CD8-positive, alpha-beta T cell (primary cell): ENCODE measurements at regions of chr1 and their contacts with region 1.

Region 1: DNA sequence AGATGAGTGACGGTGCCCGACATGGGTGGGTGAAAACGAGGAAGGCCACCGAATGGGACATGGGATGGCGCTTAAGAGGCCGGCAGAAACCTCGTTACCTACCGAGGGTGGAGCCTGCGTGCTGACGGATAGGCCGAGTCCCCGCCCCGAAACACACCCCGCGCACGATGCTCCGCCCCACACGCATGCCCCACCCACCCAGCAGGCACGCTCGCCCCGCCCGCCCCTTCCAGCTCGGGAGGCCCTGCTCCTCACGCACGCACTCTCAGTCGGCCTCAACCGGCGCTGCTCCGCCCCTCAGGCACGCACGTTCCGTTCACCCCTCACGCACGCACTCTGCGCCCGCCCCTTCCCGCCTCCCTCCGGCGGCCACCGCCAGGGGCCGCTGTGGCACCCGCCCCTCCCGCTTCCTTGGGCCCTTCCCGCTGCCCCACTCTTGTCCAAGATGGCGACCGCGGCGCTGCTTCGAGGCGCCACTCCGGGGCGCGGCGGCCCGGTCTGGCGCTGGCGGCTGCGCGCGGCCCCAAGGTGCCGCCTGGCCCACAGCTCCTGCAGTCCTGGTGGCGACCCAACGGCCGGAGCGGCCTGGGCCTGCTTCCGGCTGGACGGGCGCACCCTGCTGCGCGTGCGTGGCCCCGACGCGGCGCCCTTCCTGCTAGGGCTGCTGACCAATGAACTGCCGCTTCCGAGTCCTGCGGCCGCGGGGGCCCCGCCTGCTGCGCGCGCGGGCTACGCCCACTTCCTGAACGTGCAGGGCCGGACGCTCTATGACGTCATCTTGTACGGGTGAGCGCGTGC is at the start of gene IBA57:
- DNase-seq: peak; percentile 99 to 100 (median 100)
- ATAC-seq: peak; percentile 82
- H3K4me3 ChIP-seq: peak within 1 kb of the TSS; percentile 70 to 92
- H3K4me3 Mint-ChIP-seq: peak within 1 kb of the TSS; percentile 85
- H3K27ac ChIP-seq: peak within 1 kb of the TSS; percentile 94 to 99
- H3K27ac Mint-ChIP-seq: peak within 1 kb of the TSS; percentile 98
- H3K4me1 ChIP-seq: peaks cover 44% of the 10 kb centered on the region
- H3K4me1 Mint-ChIP-seq: peaks cover 52% of the 10 kb centered on the region
- H3K27me3 ChIP-seq: no peaks in the 10 kb centered on the region
- H3K27me3 Mint-ChIP-seq: no peaks in the 10 kb centered on the region
- CTCF ChIP-seq: peak; percentile 68
- total RNA-seq, gene IBA57: 23.5 to 23.8 TPM

Region 2: GRCh38 chr1:227787513-227788270 is 377.9 kb before region 1 on chr1:
- CTCF ChIA-PET with region 1: no interaction called
- POLR2A ChIA-PET with region 1: no interaction called
- intact Hi-C with region 1: loop called in 1 of 2 experiments (anchors 1 kb)
- DNase-seq: peak; percentile 92 to 98 (median 95)
- ATAC-seq: peak; percentile 93
- H3K4me3 ChIP-seq: peak overlapping the region; percentile 75 to 97
- H3K4me3 Mint-ChIP-seq: peak overlapping the region; percentile 83
- H3K27ac ChIP-seq: peak overlapping the region in 1 of 2 experiments; percentile 52
- H3K27ac Mint-ChIP-seq: peak overlapping the region; percentile 71
- H3K4me1 ChIP-seq: peaks cover 21% of the 10 kb centered on the region
- H3K4me1 Mint-ChIP-seq: peaks cover 21% of the 10 kb centered on the region
- H3K27me3 ChIP-seq: peaks cover 0 to 5% of the 10 kb centered on the region in 2 experiments
- H3K27me3 Mint-ChIP-seq: no peaks in the 10 kb centered on the region
- CTCF ChIP-seq: no peak

Region 3: DNA sequence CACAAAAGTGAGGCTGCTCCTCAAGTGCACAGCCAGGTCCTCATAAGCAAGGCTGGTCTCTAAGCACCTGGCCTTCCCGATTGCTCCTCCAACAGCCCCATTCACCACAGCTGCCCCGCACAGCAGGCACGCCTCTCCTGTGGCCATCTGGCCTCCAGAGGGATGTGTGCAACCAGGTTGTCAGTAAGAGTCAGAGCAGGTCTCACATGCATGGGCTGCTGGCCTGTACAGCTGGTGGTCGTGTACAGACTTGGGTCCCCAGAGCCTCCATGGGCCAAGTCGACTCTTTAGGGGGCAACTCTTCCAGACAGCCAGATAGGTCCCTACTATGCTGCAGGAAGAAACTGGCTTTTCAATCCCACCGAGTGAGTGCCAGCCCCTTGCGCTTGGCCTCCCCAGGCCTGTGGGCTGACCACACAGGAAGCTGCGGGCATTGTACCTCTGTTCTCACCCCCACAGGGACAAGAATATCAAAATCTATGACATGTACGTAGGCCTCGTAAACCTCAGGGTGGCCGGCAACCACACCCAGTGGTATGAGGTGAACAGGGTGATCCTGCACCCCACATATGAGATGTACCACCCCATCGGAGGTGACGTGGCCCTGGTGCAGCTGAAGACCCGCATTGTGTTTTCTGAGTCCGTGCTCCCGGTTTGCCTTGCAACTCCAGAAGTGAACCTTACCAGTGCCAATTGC is 348.7 kb before region 1 on chr1:
- CTCF ChIA-PET with region 1: no interaction called
- POLR2A ChIA-PET with region 1: no interaction called
- intact Hi-C with region 1: no loop called
- DNase-seq: peak in 2 of 9 experiments; percentile 38 to 55
- ATAC-seq: no peak
- H3K4me3 ChIP-seq: no peak overlapping the region
- H3K4me3 Mint-ChIP-seq: no peak overlapping the region
- H3K27ac ChIP-seq: no peak overlapping the region
- H3K27ac Mint-ChIP-seq: no peak overlapping the region
- H3K4me1 ChIP-seq: peaks cover 8% of the 10 kb centered on the region
- H3K4me1 Mint-ChIP-seq: peaks cover 9% of the 10 kb centered on the region
- H3K27me3 ChIP-seq: no peaks in the 10 kb centered on the region
- H3K27me3 Mint-ChIP-seq: no peaks in the 10 kb centered on the region
- CTCF ChIP-seq: no peak

Region 4: DNA sequence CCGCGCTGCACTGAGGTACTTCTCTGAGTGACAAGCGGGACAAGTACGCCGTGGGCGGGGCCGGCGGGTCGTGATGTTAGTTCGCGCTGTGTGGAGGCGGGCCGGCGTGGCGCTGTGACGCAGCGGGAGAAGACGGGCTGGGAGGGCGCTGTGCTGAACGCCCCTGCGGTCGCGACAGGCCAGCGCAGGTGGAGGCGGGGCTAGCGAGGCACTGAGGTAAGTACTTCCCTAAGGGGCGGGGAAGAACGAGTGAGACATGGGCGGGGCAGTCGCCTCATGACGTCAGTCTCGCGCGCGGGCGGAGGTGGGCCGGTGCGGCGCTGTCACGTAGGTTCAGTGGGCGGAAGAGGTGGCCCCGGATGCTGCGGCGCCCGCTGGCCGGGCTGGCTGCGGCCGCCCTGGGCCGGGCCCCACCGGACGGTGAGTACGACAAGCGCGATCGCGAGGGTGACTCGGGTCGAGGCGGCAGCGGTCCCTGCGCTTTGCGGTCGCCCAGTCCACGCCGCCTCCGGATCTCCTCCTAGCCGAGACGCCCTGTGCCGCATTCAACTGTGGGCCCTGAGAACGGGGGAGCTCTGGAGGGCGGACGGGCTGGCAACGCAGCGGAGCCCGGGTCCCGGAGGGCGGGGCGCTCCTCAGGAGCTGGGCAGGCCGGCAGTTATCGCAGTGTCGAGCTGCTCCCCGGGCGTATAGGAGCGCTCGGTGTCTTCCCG is 25.5 kb before region 1 on chr1 and contains the start of gene GUK1:
- CTCF ChIA-PET with region 1: interaction called, 49 read pairs
- POLR2A ChIA-PET with region 1: interaction called, 51 read pairs
- intact Hi-C with region 1: loop called (anchors 1 kb)
- DNase-seq: peak; percentile 100
- ATAC-seq: peak; percentile 88
- H3K4me3 ChIP-seq: peak within 1 kb of the TSS; percentile 91 to 99
- H3K4me3 Mint-ChIP-seq: peak within 1 kb of the TSS; percentile 94
- H3K27ac ChIP-seq: peak within 1 kb of the TSS; percentile 97 to 99
- H3K27ac Mint-ChIP-seq: peak within 1 kb of the TSS; percentile 99
- H3K4me1 ChIP-seq: peaks cover 47% of the 10 kb centered on the region
- H3K4me1 Mint-ChIP-seq: peaks cover 63% of the 10 kb centered on the region
- H3K27me3 ChIP-seq: no peaks in the 10 kb centered on the region
- H3K27me3 Mint-ChIP-seq: no peaks in the 10 kb centered on the region
- CTCF ChIP-seq: no peak
- total RNA-seq, gene GUK1: 548 to 551 TPM

Region 5: GRCh38 chr1:228180271-228180958 is 14.8 kb after region 1 on chr1:
- CTCF ChIA-PET with region 1: interaction called, 11 read pairs
- POLR2A ChIA-PET with region 1: interaction called, 3 read pairs
- intact Hi-C with region 1: no loop called
- DNase-seq: peak in 3 of 9 experiments; percentile 9 to 47 (median 31)
- ATAC-seq: peak; percentile 58
- H3K4me3 ChIP-seq: no peak overlapping the region
- H3K4me3 Mint-ChIP-seq: no peak overlapping the region
- H3K27ac ChIP-seq: no peak overlapping the region
- H3K27ac Mint-ChIP-seq: no peak overlapping the region
- H3K4me1 ChIP-seq: peaks cover 2% of the 10 kb centered on the region
- H3K4me1 Mint-ChIP-seq: peaks cover 8% of the 10 kb centered on the region
- H3K27me3 ChIP-seq: no peaks in the 10 kb centered on the region
- H3K27me3 Mint-ChIP-seq: no peaks in the 10 kb centered on the region
- CTCF ChIP-seq: peak; percentile 28

Region 6: DNA sequence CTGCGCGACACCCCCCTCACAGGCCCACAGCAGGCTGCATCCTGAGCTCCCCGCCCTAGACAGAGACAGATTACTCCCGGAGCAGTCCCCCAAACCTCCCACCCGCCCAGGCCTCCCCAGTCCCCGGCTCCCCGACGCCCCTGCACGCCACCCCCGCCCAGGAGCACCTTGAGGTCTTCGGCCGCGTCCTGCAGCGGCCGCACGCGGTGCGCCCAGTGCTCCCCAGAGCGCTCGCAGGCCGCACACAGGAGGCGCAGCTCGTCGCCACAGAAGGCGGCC is 240.4 kb after region 1 on chr1:
- CTCF ChIA-PET with region 1: no interaction called
- POLR2A ChIA-PET with region 1: interaction called, 4 read pairs
- intact Hi-C with region 1: loop called (anchors 1 to 2 kb)
- DNase-seq: peak in 1 of 9 experiments; percentile 52
- ATAC-seq: peak; percentile 8
- H3K4me3 ChIP-seq: peak overlapping the region; percentile 75 to 88
- H3K4me3 Mint-ChIP-seq: peak overlapping the region; percentile 91
- H3K27ac ChIP-seq: peak overlapping the region in 1 of 2 experiments; percentile 76
- H3K27ac Mint-ChIP-seq: peak overlapping the region; percentile 87
- H3K4me1 ChIP-seq: peaks cover 42% of the 10 kb centered on the region
- H3K4me1 Mint-ChIP-seq: peaks cover 53% of the 10 kb centered on the region
- H3K27me3 ChIP-seq: no peaks in the 10 kb centered on the region
- H3K27me3 Mint-ChIP-seq: no peaks in the 10 kb centered on the region
- CTCF ChIP-seq: no peak

Region 7: DNA sequence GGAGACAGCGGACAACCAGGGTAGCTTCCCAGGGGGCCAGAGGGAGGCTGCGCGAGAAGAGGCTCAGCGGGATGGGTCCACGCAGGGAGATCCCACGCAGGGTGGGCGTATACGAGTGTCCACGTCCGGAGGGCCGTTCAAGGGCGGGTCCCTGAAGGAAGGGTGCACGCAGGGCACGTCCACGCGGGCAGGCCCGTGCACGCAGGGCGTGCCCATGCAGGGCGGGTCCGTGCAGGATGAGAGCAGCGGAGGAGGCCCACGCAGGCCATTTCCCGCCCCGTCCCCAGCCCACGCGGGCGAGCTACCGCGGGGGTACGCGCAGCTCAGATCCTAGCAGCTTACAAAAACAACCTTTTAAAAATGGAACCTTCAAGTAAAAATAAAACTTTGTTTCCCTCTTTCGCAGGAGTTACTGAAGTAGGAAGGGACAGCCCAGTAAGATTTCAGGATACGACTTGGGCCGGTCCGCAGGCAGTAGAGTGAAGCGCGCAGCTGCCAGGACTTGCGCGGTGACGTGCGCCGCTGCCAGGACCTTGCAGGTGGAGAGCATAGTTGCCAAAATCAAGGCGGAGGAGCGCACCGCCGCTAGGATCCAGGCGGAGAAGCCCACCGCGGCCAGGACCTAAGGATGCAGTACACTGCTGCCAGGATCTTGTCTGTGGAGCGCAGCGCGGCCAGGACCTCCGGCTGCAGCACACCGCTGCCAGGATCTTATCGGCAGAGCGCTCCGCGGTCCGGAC is 321.2 kb after region 1 on chr1:
- CTCF ChIA-PET with region 1: no interaction called
- POLR2A ChIA-PET with region 1: interaction called, 6 read pairs
- intact Hi-C with region 1: loop called in 1 of 2 experiments (anchors 1 kb)
- DNase-seq: peak; percentile 66 to 94 (median 77)
- ATAC-seq: peak; percentile 75
- H3K4me3 ChIP-seq: peak overlapping the region; percentile 88 to 90
- H3K4me3 Mint-ChIP-seq: peak overlapping the region; percentile 98
- H3K27ac ChIP-seq: peak overlapping the region; percentile 100
- H3K27ac Mint-ChIP-seq: peak overlapping the region; percentile 100
- H3K4me1 ChIP-seq: peaks cover 31% of the 10 kb centered on the region
- H3K4me1 Mint-ChIP-seq: peaks cover 37% of the 10 kb centered on the region
- H3K27me3 ChIP-seq: no peaks in the 10 kb centered on the region
- H3K27me3 Mint-ChIP-seq: no peaks in the 10 kb centered on the region
- CTCF ChIP-seq: no peak